Tibial artery (tissue), 4 donors: ENCODE measurements at regions of chr12 and their contacts with region 1.

Region 1: GRCh38 chr12:27818401-27818918 is 38.4 kb upstream of the MANSC4 start:
- DNase-seq: no peak
- H3K4me3 ChIP-seq: no peak overlapping the region
- H3K27ac ChIP-seq: no peak overlapping the region
- H3K4me1 ChIP-seq: peaks cover 0 to 5% (median 1%) of the 10 kb centered on the region in 4 donors
- H3K27me3 ChIP-seq: no peaks in the 10 kb centered on the region
- CTCF ChIP-seq: no peak

Region 2: DNA sequence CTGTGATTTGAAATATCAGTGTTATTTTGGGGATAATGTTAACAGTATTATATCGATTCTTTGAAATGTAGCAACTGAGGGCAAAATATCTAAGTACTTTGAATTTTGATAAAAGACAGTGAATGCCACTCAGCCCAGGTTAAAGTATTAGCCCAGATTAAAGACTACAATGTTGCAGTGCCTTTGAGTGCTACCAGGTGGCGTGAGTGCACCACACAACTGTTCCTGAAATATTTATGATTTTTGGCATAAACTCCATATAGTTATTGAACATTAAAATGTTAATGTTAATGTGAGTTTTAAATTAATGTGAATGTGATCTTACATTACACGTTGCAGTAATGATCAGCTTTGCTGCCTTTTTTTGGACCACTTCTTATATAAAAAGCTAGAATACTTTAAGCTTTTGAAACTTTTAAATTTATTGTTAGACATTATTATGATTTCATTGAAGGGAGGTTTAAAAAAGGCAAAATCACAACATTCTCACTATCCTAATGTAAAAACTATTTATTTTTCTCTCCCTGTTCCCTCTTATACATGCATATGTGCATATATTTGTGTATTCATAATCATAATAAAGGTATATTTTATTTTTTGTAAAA is 85.3 kb before region 1 on chr12:
- intact Hi-C with region 1: loop called (anchors 5 kb)
- DNase-seq: no peak
- H3K4me3 ChIP-seq: no peak overlapping the region
- H3K27ac ChIP-seq: no peak overlapping the region
- H3K4me1 ChIP-seq: no peaks in the 10 kb centered on the region
- H3K27me3 ChIP-seq: no peaks in the 10 kb centered on the region
- CTCF ChIP-seq: peak; percentile 78 to 86